BJ (cell line): ENCODE measurements at regions of chr12 and their contacts with region 1.

Region 1: DNA sequence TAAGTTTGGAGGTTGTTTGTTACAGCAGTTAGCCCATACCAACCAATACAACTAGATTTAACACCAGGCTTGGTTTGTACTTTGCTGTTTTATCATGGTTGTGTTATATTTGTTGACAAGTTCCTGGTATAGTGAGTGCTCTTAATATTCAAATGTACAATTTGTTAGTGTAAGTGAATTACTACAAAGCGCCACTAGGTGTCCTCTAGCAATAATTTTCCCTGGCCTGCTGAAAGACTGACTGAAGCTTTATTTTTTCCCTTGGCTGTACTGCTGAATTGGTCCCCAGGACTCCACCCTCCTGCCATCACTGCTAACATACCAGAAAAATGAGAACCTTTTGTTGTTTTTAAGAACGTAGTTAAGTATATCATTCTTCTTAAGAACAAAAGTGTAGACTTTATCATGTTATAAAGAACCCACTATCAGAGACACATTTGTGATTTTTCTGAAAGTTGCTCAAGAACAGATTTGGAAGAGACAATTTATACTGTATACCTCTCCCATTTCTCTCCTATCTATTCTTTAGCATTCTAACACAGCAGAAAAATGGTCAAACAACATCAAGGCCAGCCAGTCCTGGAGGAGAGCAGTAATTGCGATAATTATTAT is 75.3 kb upstream of the FAR2 start:
- DNase-seq: no peak
- H3K4me3 ChIP-seq: no peak overlapping the region
- H3K27me3 ChIP-seq: no peaks in the 10 kb centered on the region
- CTCF ChIP-seq: peak; percentile 72

Region 2: DNA sequence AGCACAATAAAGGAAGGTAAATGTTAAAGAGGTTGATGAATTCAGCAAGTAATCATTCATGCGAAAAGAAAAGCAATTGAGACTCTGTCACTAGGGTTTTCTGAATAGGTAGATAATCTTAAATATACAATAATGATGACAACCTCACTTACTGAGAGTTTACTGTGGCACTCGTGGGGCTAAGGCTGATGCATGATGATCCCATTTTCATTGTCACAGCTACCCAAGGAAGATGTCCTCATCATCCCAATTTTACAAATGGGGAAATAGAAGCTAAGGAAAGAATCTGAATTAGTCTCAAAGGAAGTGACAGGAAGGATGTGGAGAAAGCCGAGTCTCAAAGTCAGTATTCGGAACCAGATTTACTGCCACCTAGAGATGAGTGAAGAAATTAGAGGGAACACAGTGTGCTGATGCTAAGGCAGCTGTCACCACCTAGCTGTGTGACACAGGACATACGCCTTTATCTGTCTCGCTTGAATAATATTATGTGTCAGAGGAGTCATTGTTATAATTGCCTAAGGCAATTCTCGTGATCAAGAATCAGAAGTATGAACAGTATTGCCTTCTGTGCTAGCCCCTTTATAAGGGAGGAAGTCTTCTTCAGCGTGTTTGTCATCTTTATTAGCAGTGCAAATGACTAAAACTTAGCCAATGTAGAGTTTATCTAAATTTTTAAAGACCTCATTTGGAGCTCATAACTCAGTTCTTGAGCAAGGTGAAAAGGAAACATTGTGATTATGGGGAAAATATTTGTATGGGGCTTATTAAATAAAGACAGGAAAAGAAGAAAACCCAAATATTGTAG is 244.0 kb after region 1 on chr12:
- CTCF ChIA-PET with region 1: interaction called, 10 read pairs
- POLR2A ChIA-PET with region 1: no interaction called
- DNase-seq: no peak
- H3K4me3 ChIP-seq: no peak overlapping the region
- H3K27me3 ChIP-seq: no peaks in the 10 kb centered on the region
- CTCF ChIP-seq: peak; percentile 45